Psoas muscle (tissue), 8 donors: ENCODE measurements at regions of chr19 and their contacts with region 1.

Region 1: DNA sequence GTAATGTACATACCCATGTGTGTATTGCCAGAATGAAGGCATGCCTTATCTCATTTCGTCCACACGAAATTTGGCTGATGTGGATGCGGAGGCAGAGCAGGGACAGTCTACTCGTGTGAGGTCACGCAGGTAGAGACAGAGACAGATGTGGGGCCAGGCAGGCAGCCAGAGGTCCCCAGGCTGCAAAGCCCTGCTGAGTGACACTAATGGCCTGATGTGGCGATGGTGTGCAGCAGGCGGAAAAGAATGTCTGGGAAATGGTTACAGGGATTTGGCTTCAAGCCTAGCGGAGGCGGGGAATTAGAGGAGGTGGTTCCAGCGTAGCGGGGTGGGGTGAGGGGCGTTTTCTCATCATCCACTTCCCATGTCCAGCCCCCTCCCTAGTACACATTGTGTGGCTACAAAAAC is 4.2 kb upstream of the IZUMO2 start:
- DNase-seq: no peak
- ATAC-seq: peak in 2 of 4 donors; percentile 34
- H3K4me3 ChIP-seq: no peak overlapping the region
- H3K27ac ChIP-seq: no peak overlapping the region
- H3K4me1 ChIP-seq: no peaks in the 10 kb centered on the region
- H3K27me3 ChIP-seq: peaks cover 0 to 22% (median 6%) of the 10 kb centered on the region in 3 donors
- CTCF ChIP-seq: no peak

Region 2: DNA sequence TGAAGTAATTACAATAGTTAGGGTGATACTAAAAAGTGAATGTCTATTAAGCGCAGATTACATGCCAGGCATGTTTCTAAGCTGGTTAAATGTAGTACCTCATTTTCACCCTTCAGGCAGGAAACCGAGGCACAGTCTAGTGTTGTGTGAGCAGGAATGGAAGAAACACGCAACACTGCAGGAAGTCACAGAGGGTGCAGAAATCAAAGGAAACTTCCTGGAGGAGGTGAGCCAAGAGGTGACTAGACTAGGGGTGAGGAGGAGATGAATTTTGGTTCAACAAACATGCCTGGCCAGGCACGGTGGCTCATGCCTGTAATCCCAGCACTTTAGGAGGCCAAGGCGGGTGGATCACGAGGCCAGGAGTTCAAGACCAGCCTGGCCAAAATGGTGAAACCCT is 99.7 kb before region 1 on chr19:
- intact Hi-C with region 1: no loop called
- DNase-seq: no peak
- ATAC-seq: no peak
- H3K4me3 ChIP-seq: no peak overlapping the region
- H3K27ac ChIP-seq: no peak overlapping the region
- H3K4me1 ChIP-seq: no peaks in the 10 kb centered on the region
- H3K27me3 ChIP-seq: no peaks in the 10 kb centered on the region
- CTCF ChIP-seq: no peak

Region 3: GRCh38 chr19:50258918-50259372 is 91.6 kb after region 1 on chr19:
- intact Hi-C with region 1: loop called in 1 of 2 experiments (anchors 5 kb)
- DNase-seq: peak; percentile 32 to 74
- ATAC-seq: peak in 3 of 4 donors; percentile 29 to 67 (median 61)
- H3K4me3 ChIP-seq: no peak overlapping the region
- H3K27ac ChIP-seq: no peak overlapping the region
- H3K4me1 ChIP-seq: no peaks in the 10 kb centered on the region
- H3K27me3 ChIP-seq: no peaks in the 10 kb centered on the region
- CTCF ChIP-seq: peak; percentile 64